Mammary epithelial cell (primary cell): ENCODE measurements at regions of chr11 and their contacts with region 1.

Region 1: GRCh38 chr11:101944923-101945322 is 28.6 kb upstream of the ANGPTL5 start:
- DNase-seq: no peak
- H3K4me3 ChIP-seq: no peak overlapping the region
- H3K27ac ChIP-seq: no peak overlapping the region
- H3K4me1 ChIP-seq: no peaks in the 10 kb centered on the region
- H3K27me3 ChIP-seq: no peaks in the 10 kb centered on the region
- CTCF ChIP-seq: no peak

Region 2: GRCh38 chr11:101880222-101880621 is 64.7 kb before region 1 on chr11:
- CTCF ChIA-PET with region 1: interaction called, 8 read pairs
- dilution Hi-C with region 1: loop called (anchors 5 kb)
- in situ Hi-C with region 1: no loop called
- intact Hi-C with region 1: no loop called
- DNase-seq: peak; percentile 33
- H3K4me3 ChIP-seq: no peak overlapping the region
- H3K27ac ChIP-seq: no peak overlapping the region
- H3K4me1 ChIP-seq: no peaks in the 10 kb centered on the region
- H3K27me3 ChIP-seq: no peaks in the 10 kb centered on the region
- CTCF ChIP-seq: peak; percentile 53 to 61